ENCODE measurements at regions of chr17 and their contacts with region 1.

Region 1: GRCh38 chr17:43766413-43767052 is 7.9 kb upstream of the SOST start:
- DNase-seq: peak; percentile 76 to 88
- ATAC-seq: peak; percentile 42 to 73; a peak in 4 of 6 replicates
- H3K4me3 ChIP-seq: no peak overlapping the region
- H3K27ac ChIP-seq: no peak overlapping the region
- H3K4me1 ChIP-seq: no peaks in the 10 kb centered on the region
- CTCF ChIP-seq: peak; percentile 96
- EP300 ChIP-seq: no peak
- POLR2A ChIP-seq: no peak
- RAD21 ChIP-seq: peak; percentile 35 to 64; a peak in 4 of 5 replicates

Region 2: GRCh38 chr17:43546319-43547188 is 220.0 kb before region 1 on chr17 and contains the start of gene ETV4:
- CTCF ChIA-PET with region 1: interaction called, 12 read pairs
- POLR2A ChIA-PET with region 1: no interaction called
- DNase-seq: peak; percentile 96 to 100
- ATAC-seq: peak; percentile 76 to 86
- H3K4me3 ChIP-seq: peak within 1 kb of the TSS; percentile 60
- H3K27ac ChIP-seq: peak within 1 kb of the TSS; percentile 85 to 95
- H3K4me1 ChIP-seq: peaks cover 23% of the 10 kb centered on the region
- CTCF ChIP-seq: no peak
- EP300 ChIP-seq: no peak
- POLR2A ChIP-seq: no peak
- RAD21 ChIP-seq: no peak
- polyA plus RNA-seq, gene ETV4: 39.1 and 42.5 TPM in 2 replicates

Region 3: GRCh38 chr17:43702636-43703035 is 63.9 kb before region 1 on chr17:
- CTCF ChIA-PET with region 1: no interaction called
- POLR2A ChIA-PET with region 1: no interaction called
- DNase-seq: peak; percentile 72 to 76
- ATAC-seq: peak; percentile 17 to 82; a peak in 3 of 6 replicates
- H3K4me3 ChIP-seq: no peak overlapping the region
- H3K27ac ChIP-seq: no peak overlapping the region
- H3K4me1 ChIP-seq: peaks cover 16% of the 10 kb centered on the region
- CTCF ChIP-seq: no peak
- EP300 ChIP-seq: no peak
- POLR2A ChIP-seq: no peak
- RAD21 ChIP-seq: no peak

Region 4: GRCh38 chr17:43740541-43740940 is 26.0 kb before region 1 on chr17:
- CTCF ChIA-PET with region 1: interaction called, 288 read pairs
- POLR2A ChIA-PET with region 1: no interaction called
- DNase-seq: no peak
- ATAC-seq: peak in 1 of 2 experiments; percentile 43; a peak in 3 of 6 replicates
- H3K4me3 ChIP-seq: no peak overlapping the region
- H3K27ac ChIP-seq: peak overlapping the region in 1 of 2 experiments; percentile 66; a peak in 3 of 6 replicates
- H3K4me1 ChIP-seq: peaks cover 13% of the 10 kb centered on the region
- CTCF ChIP-seq: no peak
- EP300 ChIP-seq: no peak
- POLR2A ChIP-seq: no peak
- RAD21 ChIP-seq: no peak

Region 5: GRCh38 chr17:43778337-43779144 is 12.0 kb after region 1 on chr17 and contains the start of gene DUSP3:
- CTCF ChIA-PET with region 1: interaction called, 151 read pairs
- POLR2A ChIA-PET with region 1: interaction called, 11 read pairs
- DNase-seq: peak; percentile 96 to 97
- ATAC-seq: peak; percentile 90 to 93
- H3K4me3 ChIP-seq: peak within 1 kb of the TSS; percentile 71
- H3K27ac ChIP-seq: peak within 1 kb of the TSS; percentile 93 to 98
- H3K4me1 ChIP-seq: peaks cover 16% of the 10 kb centered on the region
- CTCF ChIP-seq: no peak
- EP300 ChIP-seq: no peak
- POLR2A ChIP-seq: peak; percentile 72
- RAD21 ChIP-seq: no peak
- polyA plus RNA-seq, gene DUSP3: 60.2 and 62.2 TPM in 2 replicates

Region 6: GRCh38 chr17:43823350-43824084 is 57.0 kb after region 1 on chr17:
- CTCF ChIA-PET with region 1: interaction called, 10 read pairs
- POLR2A ChIA-PET with region 1: no interaction called
- DNase-seq: no peak
- ATAC-seq: no peak
- H3K4me3 ChIP-seq: no peak overlapping the region
- H3K27ac ChIP-seq: no peak overlapping the region
- H3K4me1 ChIP-seq: no peaks in the 10 kb centered on the region
- CTCF ChIP-seq: no peak
- EP300 ChIP-seq: no peak
- POLR2A ChIP-seq: no peak
- RAD21 ChIP-seq: no peak

Measured in A549 (cell line).